CD4-positive, alpha-beta memory T cell (primary cell): ENCODE measurements at regions of chr5 and their contacts with region 1.

Region 1: DNA sequence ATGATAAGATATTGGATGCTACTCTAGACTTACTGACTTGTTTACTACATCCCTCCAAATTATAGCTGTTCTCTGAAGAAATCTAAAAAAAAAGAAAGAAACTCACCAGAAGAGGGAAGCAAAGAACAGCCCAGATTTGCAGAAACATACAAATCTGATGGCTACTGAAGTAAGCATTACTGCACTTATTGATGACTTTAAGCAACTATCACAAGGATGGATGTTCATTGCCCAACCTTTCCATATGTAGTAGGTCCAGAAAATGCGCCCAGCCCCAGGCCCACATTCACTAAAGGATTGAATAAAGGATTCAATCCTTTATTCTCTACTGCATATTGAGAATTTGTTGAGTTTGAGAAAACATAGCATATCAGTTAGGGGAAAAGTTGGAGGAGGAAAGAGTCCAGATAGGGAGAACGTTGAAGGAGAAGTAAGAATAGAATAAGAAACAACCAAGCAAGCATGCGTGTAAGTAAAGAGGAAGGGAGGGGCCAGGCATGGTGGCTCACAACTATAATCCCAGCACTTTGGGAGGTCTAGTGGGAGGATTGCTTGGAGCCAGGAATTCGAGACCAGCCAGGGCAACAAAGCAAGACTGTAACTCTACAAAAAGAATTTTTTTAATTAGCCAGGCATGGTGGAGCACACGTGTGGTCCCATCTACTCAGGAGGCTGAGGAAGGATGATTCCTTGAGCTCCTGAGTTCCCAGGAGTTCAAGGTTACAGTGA is 33.8 kb upstream of the DTWD2 start:
- DNase-seq: peak in 4 of 5 donors; percentile 42 to 47 (median 46)
- H3K4me3 ChIP-seq: no peak overlapping the region
- H3K4me3 Mint-ChIP-seq: no peak overlapping the region
- H3K27ac ChIP-seq: no peak overlapping the region
- H3K27ac Mint-ChIP-seq: peak overlapping the region in 1 of 7 donors; percentile 65
- H3K4me1 ChIP-seq: no peaks in the 10 kb centered on the region
- H3K4me1 Mint-ChIP-seq: no peaks in the 10 kb centered on the region
- H3K27me3 ChIP-seq: no peaks in the 10 kb centered on the region
- H3K27me3 Mint-ChIP-seq: no peaks in the 10 kb centered on the region

Region 2: GRCh38 chr5:119037501-119038215 is 15.5 kb after region 1 on chr5:
- CTCF ChIA-PET with region 1: no interaction called
- POLR2A ChIA-PET with region 1: no interaction called
- intact Hi-C with region 1: no loop called
- DNase-seq: no peak
- H3K4me3 ChIP-seq: no peak overlapping the region
- H3K4me3 Mint-ChIP-seq: no peak overlapping the region
- H3K27ac ChIP-seq: no peak overlapping the region
- H3K27ac Mint-ChIP-seq: no peak overlapping the region
- H3K4me1 ChIP-seq: no peaks in the 10 kb centered on the region
- H3K4me1 Mint-ChIP-seq: no peaks in the 10 kb centered on the region
- H3K27me3 ChIP-seq: no peaks in the 10 kb centered on the region
- H3K27me3 Mint-ChIP-seq: peaks cover 0 to 1% of the 10 kb centered on the region in 2 donors

Region 3: DNA sequence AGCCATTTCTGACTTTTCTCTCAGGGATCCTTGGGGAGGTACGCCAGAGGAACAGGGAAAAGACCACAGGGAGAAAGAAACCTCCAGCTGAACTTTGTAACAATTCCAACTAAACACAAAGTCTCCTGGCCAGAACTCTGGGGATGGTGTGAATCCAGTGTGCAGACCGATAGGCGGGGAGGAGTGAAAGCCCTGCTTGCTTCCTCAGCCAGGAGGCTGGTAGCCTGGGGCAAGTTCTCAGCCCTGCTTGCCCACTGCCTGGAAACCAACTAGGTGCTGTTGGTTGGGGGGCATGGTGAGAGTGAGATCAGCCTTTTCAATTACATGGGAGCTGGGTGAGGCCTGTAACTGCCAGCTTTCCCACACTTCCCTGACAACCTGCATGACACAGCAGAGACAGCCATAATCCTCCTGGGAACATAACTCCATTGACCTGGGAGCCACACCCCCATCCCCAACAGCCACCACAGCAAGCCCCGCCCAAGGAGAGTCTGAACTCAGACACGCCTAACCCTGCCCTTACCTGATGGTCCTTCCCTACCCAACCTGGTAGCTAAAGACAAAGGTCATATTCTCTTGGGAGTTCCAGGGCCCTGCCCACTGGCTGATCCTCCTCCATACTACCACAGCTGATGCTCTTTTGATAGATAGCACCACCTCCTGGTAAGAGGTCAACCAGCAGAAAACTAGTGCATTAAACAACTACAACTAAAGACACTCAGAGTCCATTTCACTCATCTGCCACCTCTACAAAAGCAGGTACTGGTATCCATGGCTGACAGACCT is 233.6 kb after region 1 on chr5:
- CTCF ChIA-PET with region 1: interaction called, 5 read pairs
- POLR2A ChIA-PET with region 1: no interaction called
- intact Hi-C with region 1: loop called (anchors 10 kb)
- DNase-seq: no peak
- H3K4me3 ChIP-seq: no peak overlapping the region
- H3K4me3 Mint-ChIP-seq: no peak overlapping the region
- H3K27ac ChIP-seq: no peak overlapping the region
- H3K27ac Mint-ChIP-seq: peak overlapping the region in 1 of 7 donors; percentile 46
- H3K4me1 ChIP-seq: no peaks in the 10 kb centered on the region
- H3K4me1 Mint-ChIP-seq: peaks cover 0 to 5% (median 2%) of the 10 kb centered on the region in 4 donors
- H3K27me3 ChIP-seq: no peaks in the 10 kb centered on the region
- H3K27me3 Mint-ChIP-seq: no peaks in the 10 kb centered on the region

Region 4: DNA sequence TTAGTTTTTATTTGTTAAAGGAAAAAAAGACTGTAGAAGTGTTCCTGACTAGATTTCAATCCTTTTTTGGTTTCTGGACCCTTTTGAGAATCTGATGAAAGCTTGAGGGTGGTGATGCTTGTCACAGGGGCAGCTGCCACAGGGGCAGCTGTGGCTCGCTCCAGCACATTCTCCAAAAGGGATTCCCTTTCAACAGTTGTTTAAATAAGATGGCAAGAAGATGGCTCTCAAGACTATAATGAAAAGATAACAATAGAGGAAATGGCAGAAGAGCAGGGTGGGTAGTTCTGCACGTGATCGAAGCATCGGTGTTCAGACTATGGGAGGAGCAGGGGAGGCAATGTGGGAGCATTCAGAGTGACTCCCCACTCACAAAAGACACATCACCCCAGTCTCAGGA is 287.1 kb after region 1 on chr5:
- CTCF ChIA-PET with region 1: interaction called, 3 read pairs
- POLR2A ChIA-PET with region 1: no interaction called
- intact Hi-C with region 1: loop called (anchors 5 kb)
- DNase-seq: peak in 1 of 5 donors; percentile 41
- H3K4me3 ChIP-seq: no peak overlapping the region
- H3K4me3 Mint-ChIP-seq: peak overlapping the region; percentile 68 to 93 (median 78)
- H3K27ac ChIP-seq: peak overlapping the region; percentile 52
- H3K27ac Mint-ChIP-seq: peak overlapping the region; percentile 94 to 99 (median 98)
- H3K4me1 ChIP-seq: peaks cover 100% of the 10 kb centered on the region
- H3K4me1 Mint-ChIP-seq: peaks cover 70 to 97% (median 82%) of the 10 kb centered on the region in 4 donors
- H3K27me3 ChIP-seq: no peaks in the 10 kb centered on the region
- H3K27me3 Mint-ChIP-seq: no peaks in the 10 kb centered on the region

Region 5: GRCh38 chr5:119435436-119436132 is 413.4 kb after region 1 on chr5:
- CTCF ChIA-PET with region 1: interaction called, 17 read pairs
- POLR2A ChIA-PET with region 1: no interaction called
- intact Hi-C with region 1: loop called (anchors 1 kb)
- DNase-seq: peak; percentile 61 to 73 (median 64)
- H3K4me3 ChIP-seq: no peak overlapping the region
- H3K4me3 Mint-ChIP-seq: peak overlapping the region in 1 of 8 donors; percentile 18
- H3K27ac ChIP-seq: no peak overlapping the region
- H3K27ac Mint-ChIP-seq: no peak overlapping the region
- H3K4me1 ChIP-seq: no peaks in the 10 kb centered on the region
- H3K4me1 Mint-ChIP-seq: peaks cover 3 to 8% (median 8%) of the 10 kb centered on the region in 4 donors
- H3K27me3 ChIP-seq: no peaks in the 10 kb centered on the region
- H3K27me3 Mint-ChIP-seq: peaks cover 25 to 37% of the 10 kb centered on the region in 2 donors